Activated B cell treated with CpG ODN at 0.5 μM for 24 hours (primary cell): ENCODE measurements at regions of chr16 and their contacts with region 1.

Region 1: GRCh38 chr16:67561824-67562525 is 351 bp upstream of the CTCF start:
- DNase-seq: peak; percentile 97
- ATAC-seq: peak; percentile 77
- H3K4me3 Mint-ChIP-seq: peak overlapping the region; percentile 91
- H3K27ac Mint-ChIP-seq: peak overlapping the region; percentile 91
- H3K4me1 Mint-ChIP-seq: peaks cover 61% of the 10 kb centered on the region
- H3K27me3 Mint-ChIP-seq: no peaks in the 10 kb centered on the region
- CTCF ChIP-seq: no peak

Region 2: GRCh38 chr16:67480833-67481560 is 81.0 kb before region 1 on chr16 and contains the start of gene ATP6V0D1:
- CTCF ChIA-PET with region 1: interaction called, 8 read pairs
- POLR2A ChIA-PET with region 1: interaction called, 15 read pairs
- intact Hi-C with region 1: loop called (anchors 1 kb)
- DNase-seq: peak; percentile 99
- ATAC-seq: peak; percentile 82
- H3K4me3 Mint-ChIP-seq: peak within 1 kb of the TSS; percentile 99
- H3K27ac Mint-ChIP-seq: peak within 1 kb of the TSS; percentile 99
- H3K4me1 Mint-ChIP-seq: peaks cover 69% of the 10 kb centered on the region
- H3K27me3 Mint-ChIP-seq: no peaks in the 10 kb centered on the region
- CTCF ChIP-seq: no peak
- total RNA-seq, gene ATP6V0D1: 70.2 and 74.5 TPM in 2 replicates

Region 3: DNA sequence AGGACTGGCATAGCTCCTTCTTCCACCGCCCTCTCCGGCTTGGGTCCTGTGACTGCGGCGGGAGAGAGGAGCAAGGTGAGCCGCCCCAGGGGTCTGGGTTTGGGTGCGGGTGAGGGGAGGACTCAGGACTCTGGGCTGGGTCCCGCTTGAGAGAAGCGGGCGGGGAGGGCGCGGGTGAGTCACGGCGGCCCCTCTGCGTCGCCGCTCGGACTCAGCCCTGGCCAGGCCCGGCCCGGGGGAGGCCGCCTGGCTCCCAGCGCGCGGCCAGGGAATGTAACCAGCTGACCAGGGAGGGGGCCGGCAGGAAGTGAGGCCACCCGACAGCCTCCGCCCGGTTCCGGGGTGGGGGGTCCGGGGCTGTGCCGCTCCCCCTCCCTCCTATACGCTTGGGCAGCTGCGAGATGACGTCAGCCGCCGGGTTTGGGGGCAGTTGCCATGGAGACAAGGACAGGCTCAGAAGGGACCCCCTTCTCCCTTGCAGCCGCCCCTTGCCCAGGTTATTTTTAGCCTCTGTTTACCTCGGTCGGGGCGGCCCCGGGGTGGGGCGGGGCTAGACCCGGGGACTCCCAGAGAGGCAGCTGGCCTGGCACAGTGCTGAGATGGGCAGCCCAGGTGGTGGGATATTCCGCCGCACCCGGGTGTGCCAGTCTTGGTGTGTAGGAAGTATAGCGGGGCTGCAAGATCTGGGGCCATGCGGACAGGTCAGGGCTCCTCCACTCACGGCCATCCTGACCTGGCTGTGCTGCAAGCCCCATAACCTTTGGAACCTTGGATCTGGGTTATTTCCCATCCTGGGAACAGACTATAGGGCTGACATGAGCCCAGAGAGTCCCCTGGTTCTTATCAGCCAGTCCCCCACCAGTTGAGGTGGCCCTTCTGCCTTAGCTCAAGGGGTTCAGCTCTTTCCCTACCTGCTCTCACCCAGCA is 31.7 kb before region 1 on chr16:
- CTCF ChIA-PET with region 1: interaction called, 8 read pairs
- POLR2A ChIA-PET with region 1: interaction called, 54 read pairs
- intact Hi-C with region 1: loop called (anchors 1 kb)
- DNase-seq: peak; percentile 81
- ATAC-seq: peak; percentile 65
- H3K4me3 Mint-ChIP-seq: peak overlapping the region; percentile 90
- H3K27ac Mint-ChIP-seq: peak overlapping the region; percentile 95
- H3K4me1 Mint-ChIP-seq: peaks cover 61% of the 10 kb centered on the region
- H3K27me3 Mint-ChIP-seq: no peaks in the 10 kb centered on the region
- CTCF ChIP-seq: no peak

Region 4: DNA sequence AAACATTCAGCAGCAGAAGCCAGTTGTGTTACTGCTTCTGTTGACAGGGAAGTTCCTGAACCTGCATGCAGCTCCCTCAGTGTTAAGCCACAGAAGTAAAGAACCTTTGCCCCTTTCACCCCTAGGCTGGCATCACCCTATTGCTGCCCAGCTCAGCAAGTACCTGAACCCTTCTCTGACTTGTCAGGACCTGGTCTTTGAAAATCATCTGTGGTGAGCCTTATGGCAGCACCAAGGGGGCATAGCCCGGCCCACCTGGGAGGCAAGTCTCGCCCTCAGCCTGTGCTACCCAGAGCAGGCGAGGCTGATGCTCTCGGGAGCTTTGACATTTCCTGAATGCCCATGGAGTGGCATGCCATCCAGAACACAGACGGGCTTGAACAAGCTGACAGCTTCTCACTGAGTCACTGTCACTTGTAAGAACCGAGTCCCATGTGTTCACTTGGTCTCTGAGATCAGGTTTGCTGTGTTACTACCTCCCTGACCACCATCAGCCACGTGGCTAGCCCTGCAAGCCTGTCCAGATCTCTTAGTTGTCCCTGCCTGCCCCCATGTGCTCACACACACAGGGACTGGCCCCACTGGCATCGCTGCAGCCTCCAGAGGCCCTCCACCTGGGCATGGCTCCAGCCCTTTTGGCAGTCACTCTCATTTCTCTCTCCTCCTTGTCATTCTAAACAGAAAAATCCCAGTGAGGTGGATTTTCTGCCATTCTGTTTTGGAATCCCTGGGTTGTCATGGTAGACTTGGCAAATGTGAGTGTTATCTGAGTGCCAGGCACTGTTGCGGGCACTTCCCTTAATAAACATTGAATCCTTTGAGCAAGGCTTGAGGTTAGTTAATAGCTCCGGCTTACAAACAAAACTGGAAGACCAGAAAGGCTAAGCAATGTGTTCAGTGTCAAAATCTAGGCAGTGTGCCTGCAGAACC is 80.1 kb after region 1 on chr16:
- CTCF ChIA-PET with region 1: interaction called, 27 read pairs
- POLR2A ChIA-PET with region 1: interaction called, 32 read pairs
- intact Hi-C with region 1: loop called (anchors 1 kb)
- DNase-seq: no peak
- ATAC-seq: no peak
- H3K4me3 Mint-ChIP-seq: no peak overlapping the region
- H3K27ac Mint-ChIP-seq: no peak overlapping the region
- H3K4me1 Mint-ChIP-seq: peaks cover 17% of the 10 kb centered on the region
- H3K27me3 Mint-ChIP-seq: no peaks in the 10 kb centered on the region
- CTCF ChIP-seq: no peak

Region 5: GRCh38 chr16:67719048-67719777 is 157.2 kb after region 1 on chr16 and contains the start of gene GFOD2:
- CTCF ChIA-PET with region 1: no interaction called
- POLR2A ChIA-PET with region 1: interaction called, 3 read pairs
- intact Hi-C with region 1: loop called (anchors 1 kb)
- DNase-seq: peak; percentile 98
- ATAC-seq: peak; percentile 94
- H3K4me3 Mint-ChIP-seq: peak within 1 kb of the TSS; percentile 97
- H3K27ac Mint-ChIP-seq: peak within 1 kb of the TSS; percentile 98
- H3K4me1 Mint-ChIP-seq: peaks cover 37% of the 10 kb centered on the region
- H3K27me3 Mint-ChIP-seq: no peaks in the 10 kb centered on the region
- CTCF ChIP-seq: no peak
- total RNA-seq, gene GFOD2: 9.7 and 12.6 TPM in 2 replicates

Region 6: DNA sequence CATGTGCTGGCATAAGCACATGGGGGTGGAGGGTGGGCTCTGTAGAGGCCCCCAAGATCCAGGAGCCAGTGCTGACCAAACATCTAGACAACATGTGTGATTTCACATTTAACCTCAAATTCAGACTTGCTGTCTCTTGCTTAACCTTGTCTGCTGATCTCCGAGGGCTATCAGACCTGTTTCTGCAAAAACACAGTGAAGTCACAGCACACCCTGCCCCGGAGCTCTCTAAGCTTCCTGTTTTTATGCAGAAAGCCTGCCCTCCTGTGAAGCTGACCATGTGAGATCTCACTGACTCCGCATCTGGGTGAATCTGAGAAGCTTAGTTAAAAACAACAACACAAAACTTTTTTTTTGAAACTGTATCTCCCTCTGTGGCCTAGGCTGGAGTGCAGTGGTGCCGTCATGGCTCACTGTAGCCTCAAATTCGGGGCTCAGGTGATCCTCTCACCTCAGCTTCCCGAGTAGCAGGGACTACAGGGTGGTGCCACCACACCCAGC is 443.9 kb after region 1 on chr16:
- CTCF ChIA-PET with region 1: no interaction called
- POLR2A ChIA-PET with region 1: interaction called, 18 read pairs
- intact Hi-C with region 1: no loop called
- DNase-seq: no peak
- ATAC-seq: peak; percentile 98
- H3K4me3 Mint-ChIP-seq: peak overlapping the region; percentile 58
- H3K27ac Mint-ChIP-seq: peak overlapping the region; percentile 95
- H3K4me1 Mint-ChIP-seq: peaks cover 40% of the 10 kb centered on the region
- H3K27me3 Mint-ChIP-seq: no peaks in the 10 kb centered on the region
- CTCF ChIP-seq: no peak